HepG2 (cell line): ENCODE measurements at regions of chr1 and their contacts with region 1.

Region 1: GRCh38 chr1:11099310-11100149 is at the start of gene EXOSC10:
- DNase-seq: peak; percentile 81
- ATAC-seq: peak; percentile 92
- H3K4me3 ChIP-seq: peak within 1 kb of the TSS; percentile 94 to 98 (median 95)
- H3K27ac ChIP-seq: peak within 1 kb of the TSS; percentile 85
- H3K4me1 ChIP-seq: peaks cover 20% of the 10 kb centered on the region
- H3K27me3 ChIP-seq: no peaks in the 10 kb centered on the region; a peak in 1 of 5 replicates
- CTCF ChIP-seq: 0 out of 2 replicates have a peak, but pooled peaks have one; percentile 17
- EP300 ChIP-seq: 0 out of 4 replicates have a peak, but pooled peaks of 1 of the 2 experiments have one; percentile 22
- POLR2A ChIP-seq: peak; percentile 65 to 83
- RAD21 ChIP-seq: peak; percentile 34; the same call in 1 of the 2 replicates
- total RNA-seq, gene EXOSC10: 67.6 and 68.7 TPM in 2 replicates

Region 2: DNA sequence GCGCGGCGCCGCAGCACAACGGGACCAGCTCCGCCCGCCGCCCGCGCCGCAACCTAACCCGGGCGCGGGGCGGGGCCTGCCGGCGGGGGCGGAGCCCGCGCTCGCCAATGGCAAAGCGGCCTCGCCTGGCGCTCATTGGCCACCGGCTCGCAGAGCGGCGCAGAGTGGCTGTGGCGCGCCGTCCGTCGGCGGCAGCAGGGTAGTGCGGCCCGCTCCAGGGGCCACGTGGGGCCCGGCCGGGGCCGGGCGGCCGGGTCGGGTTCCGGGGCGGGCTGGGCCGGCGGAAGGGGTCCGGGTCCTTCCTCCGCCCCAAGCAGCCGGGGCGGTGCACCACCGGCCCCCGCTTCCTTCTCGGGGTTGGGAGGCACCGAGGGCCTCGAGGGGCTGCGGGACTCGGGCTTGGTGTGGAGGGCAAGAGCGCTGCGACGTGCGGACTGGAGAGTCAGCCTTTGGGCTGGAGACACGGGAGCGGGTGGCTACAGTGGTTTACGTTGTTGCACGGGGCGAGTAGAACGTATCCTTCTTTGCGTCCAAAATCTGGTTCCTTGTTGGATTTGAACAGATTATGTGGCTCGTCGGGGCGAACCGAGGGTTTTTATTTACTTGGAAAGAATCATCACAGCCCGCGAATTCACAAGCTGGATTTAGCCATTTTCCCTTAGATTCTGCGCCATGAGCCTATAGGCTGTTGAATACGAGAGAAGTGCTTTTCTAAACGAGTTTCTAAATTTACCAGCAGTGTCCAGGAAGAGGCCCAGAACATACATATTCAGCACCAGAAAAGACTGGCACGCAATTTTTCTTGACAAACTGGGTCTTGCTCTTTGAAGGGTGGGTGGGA is 39.3 kb before region 1 on chr1 and contains the start of gene SRM:
- CTCF ChIA-PET with region 1: no interaction called
- POLR2A ChIA-PET with region 1: interaction called, 15 read pairs
- in situ Hi-C with region 1: no loop called
- intact Hi-C with region 1: loop called (anchors 1 kb)
- DNase-seq: peak; percentile 76
- ATAC-seq: peak; percentile 94
- H3K4me3 ChIP-seq: peak within 1 kb of the TSS; percentile 85 to 97 (median 86)
- H3K27ac ChIP-seq: peak within 1 kb of the TSS; percentile 77
- H3K4me1 ChIP-seq: peaks cover 30% of the 10 kb centered on the region
- H3K27me3 ChIP-seq: no peaks in the 10 kb centered on the region; a peak in 1 of 5 replicates
- CTCF ChIP-seq: peak; percentile 38; the same call in 1 of the 2 replicates
- EP300 ChIP-seq: no peak
- POLR2A ChIP-seq: peak; percentile 67 to 77; a peak in 2 of 4 replicates
- RAD21 ChIP-seq: peak; percentile 32
- total RNA-seq, gene SRM: 30.3 and 31.8 TPM in 2 replicates

Region 3: GRCh38 chr1:11178021-11179015 is 78.8 kb after region 1 on chr1:
- CTCF ChIA-PET with region 1: no interaction called
- POLR2A ChIA-PET with region 1: no interaction called
- in situ Hi-C with region 1: no loop called
- intact Hi-C with region 1: no loop called
- DNase-seq: no peak
- ATAC-seq: no peak
- H3K4me3 ChIP-seq: no peak overlapping the region
- H3K27ac ChIP-seq: no peak overlapping the region
- H3K4me1 ChIP-seq: peaks cover 9% of the 10 kb centered on the region; the same call in 1 of the 2 replicates
- H3K27me3 ChIP-seq: no peaks in the 10 kb centered on the region
- CTCF ChIP-seq: no peak
- EP300 ChIP-seq: no peak
- POLR2A ChIP-seq: no peak
- RAD21 ChIP-seq: no peak